ENCODE measurements at regions of chr22 and their contacts with region 1.

Region 1: DNA sequence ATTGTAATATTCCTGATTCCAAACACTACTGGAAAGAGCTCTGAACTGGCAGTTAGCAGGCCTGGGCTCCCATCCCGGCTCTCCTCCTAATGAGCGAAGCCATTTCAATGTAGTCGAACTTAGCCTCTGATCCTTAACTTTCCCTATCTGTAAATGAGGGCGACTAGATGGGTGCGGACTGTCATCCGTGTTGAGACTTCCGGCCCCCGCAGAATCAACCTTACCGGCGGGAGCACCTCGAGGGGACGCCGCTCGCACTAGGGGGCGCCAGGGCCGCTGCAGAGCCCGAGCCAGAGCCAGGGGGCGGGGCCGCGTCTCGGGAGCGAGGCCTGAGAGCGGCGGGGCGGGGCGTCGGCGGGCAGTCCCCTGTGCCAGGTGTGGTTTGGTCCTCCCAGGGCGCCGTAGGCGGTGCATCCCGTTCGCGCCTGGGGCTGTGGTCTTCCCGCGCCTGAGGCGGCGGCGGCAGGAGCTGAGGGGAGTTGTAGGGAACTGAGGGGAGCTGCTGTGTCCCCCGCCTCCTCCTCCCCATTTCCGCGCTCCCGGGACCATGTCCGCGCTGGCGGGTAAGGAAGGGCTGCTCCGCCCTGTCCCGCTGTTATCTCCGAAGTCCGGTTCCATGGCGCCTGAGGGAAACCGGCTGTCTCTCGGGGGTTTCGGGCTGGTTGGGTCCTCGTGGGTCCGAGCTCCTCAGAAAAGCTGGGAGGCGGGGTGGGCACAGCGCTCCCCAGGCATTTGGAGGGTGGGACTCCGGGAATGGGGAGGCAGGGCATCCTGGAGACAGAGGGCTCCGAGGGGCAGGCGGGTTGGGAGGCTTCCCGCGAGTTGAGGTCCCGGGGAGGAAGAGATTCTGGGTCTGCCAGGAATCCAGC is at the start of gene LIMK2:
- DNase-seq: no peak
- ATAC-seq: peak; percentile 98
- H3K4me3 ChIP-seq: peak within 1 kb of the TSS; percentile 84 to 91
- H3K27ac ChIP-seq: peak within 1 kb of the TSS; percentile 79
- H3K4me1 ChIP-seq: peaks cover 6% of the 10 kb centered on the region; the same call in 1 of the 2 replicates
- H3K27me3 ChIP-seq: no peaks in the 10 kb centered on the region
- CTCF ChIP-seq: peak; percentile 92
- total RNA-seq, gene LIMK2: 12.6 TPM

Region 2: DNA sequence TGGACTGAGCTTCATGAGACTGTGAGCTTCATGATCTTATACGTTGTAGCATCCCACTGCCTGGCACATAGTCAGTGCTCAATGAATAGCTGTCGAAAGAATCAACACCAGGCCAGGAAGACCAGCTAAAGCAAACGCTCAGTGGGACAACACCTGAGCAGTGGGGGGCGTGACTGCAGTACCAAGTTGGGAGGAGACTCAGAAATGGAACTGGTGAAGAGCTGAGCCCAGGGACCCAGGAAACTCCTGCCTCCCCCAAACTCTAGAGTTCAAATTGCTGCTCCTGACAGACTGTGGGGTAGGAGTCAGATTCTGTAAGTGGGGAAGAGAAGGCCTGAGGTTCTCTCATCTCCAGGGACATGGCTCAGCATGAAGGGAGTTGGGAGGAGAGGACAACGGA is 302.8 kb before region 1 on chr22:
- CTCF ChIA-PET with region 1: interaction called, 10 read pairs
- POLR2A ChIA-PET with region 1: no interaction called
- in situ Hi-C with region 1: no loop called
- intact Hi-C with region 1: no loop called
- DNase-seq: no peak
- ATAC-seq: no peak
- H3K4me3 ChIP-seq: no peak overlapping the region
- H3K27ac ChIP-seq: no peak overlapping the region
- H3K4me1 ChIP-seq: no peaks in the 10 kb centered on the region
- H3K27me3 ChIP-seq: no peaks in the 10 kb centered on the region
- CTCF ChIP-seq: no peak